ENCODE measurements at regions of chr9 and their contacts with region 1.

Region 1: DNA sequence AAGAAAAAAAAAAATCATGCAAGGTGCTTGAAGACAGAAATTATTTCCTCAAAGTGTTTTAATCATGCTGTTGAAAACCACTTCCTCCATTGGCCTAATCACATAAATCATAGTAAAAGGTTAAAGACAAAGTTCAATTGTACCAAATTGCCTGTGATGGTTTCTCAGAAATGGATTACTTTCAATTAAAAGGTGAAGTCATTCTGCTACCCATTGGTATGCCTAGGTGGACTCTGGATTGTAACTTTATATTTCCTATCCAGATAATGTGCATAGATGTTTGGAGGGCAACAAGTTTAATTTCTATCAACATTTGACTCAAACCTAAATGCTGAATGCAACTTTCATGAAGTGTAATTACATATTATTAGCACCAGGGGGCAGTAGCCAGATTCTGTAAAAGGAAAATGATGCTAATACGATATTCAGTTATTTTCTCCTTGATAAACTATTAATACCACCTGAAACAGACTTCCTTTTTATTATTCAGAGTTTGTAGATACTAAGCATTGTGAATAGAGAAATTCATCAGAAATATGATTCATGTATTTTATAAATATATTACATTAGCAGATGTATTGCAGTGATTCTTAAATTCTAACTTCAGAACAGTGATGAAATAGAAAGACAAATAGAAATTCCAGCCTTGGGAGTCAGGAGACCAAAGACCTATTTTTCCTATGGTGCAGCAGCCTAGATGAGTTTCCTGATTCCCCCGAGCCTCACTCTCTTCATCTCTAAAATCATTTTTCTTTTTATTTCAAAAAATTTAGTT is 148.2 kb downstream of the CAAP1 start:
- DNase-seq: no peak
- CTCF ChIP-seq: peak; percentile 67

Region 2: DNA sequence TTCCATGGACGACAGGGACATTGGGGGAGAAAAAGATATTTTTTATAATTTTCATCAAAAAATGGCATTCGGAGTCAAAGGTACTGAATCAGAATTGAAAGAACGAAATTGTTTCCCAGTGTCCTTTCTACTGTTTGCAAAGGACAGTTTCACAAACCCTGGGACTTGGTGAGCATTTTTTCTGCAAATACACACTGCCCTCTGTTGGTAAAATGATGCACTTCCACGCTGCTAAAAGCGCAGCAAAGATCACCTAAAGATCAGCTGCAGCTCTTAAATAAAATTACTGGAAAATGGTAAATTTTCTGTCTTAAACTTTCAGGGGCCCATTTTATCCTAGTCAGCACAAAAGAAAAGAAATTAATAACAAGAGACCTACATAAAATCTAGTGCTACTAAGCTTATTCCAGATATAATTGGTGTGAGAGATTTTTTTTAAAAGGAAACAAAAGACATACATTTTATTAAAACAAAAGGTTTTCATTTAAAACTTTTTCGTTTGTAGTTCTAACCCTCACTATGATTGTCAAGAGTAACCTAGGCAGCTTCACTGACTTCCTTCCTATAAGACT is 417.8 kb before region 1 on chr9:
- in situ Hi-C with region 1: no loop called
- DNase-seq: peak; percentile 31
- CTCF ChIP-seq: peak; percentile 75

Region 3: DNA sequence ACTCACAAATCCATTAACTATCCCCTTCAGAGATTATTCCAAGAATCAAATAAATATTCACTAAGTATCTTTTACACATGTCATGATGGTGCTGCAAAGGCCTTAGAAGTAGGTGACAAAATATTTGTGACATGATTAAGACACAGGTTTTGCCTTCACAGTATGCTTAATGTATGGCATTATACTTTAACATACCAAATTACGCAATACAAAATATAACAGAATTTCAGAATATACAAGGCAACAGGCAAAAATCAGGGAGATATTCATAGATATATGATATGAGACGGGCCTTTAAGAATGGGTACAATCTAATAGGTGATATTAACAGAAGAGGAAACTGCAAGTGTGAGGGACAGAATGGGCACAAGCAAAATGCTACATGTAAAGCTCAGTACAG is 106.6 kb after region 1 on chr9:
- in situ Hi-C with region 1: loop called (anchors 10 kb)
- DNase-seq: no peak
- CTCF ChIP-seq: no peak

Region 4: GRCh38 chr9:27019589-27019988 is 275.2 kb after region 1 on chr9:
- in situ Hi-C with region 1: loop called (anchors 25 kb)
- DNase-seq: no peak
- CTCF ChIP-seq: no peak